ENCODE measurements at regions of chr9 and their contacts with region 1.

Region 1: GRCh38 chr9:131402738-131403492 is 9.0 kb downstream of the PRRC2B start:
- DNase-seq: peak; percentile 79 to 90
- ATAC-seq: peak; percentile 73 to 85 (median 80)
- H3K4me3 ChIP-seq: peak overlapping the region in 6 of 10 donors; percentile 6 to 23 (median 18)
- H3K27ac ChIP-seq: peak overlapping the region in 9 of 10 donors; percentile 60 to 89 (median 78)
- H3K4me1 ChIP-seq: peaks cover 52 to 100% (median 100%) of the 10 kb centered on the region in 9 donors
- H3K27me3 ChIP-seq: no peaks in the 10 kb centered on the region
- CTCF ChIP-seq: no peak

Region 2: GRCh38 chr9:131349881-131350563 is 52.9 kb before region 1 on chr9:
- intact Hi-C with region 1: no loop called
- DNase-seq: peak; percentile 91 to 92
- ATAC-seq: peak; percentile 89 to 97 (median 94)
- H3K4me3 ChIP-seq: peak overlapping the region in 8 of 10 donors; percentile 4 to 45 (median 38)
- H3K27ac ChIP-seq: peak overlapping the region in 2 of 10 donors; percentile 20 to 24
- H3K4me1 ChIP-seq: peaks cover 4 to 12% (median 10%) of the 10 kb centered on the region in 9 donors
- H3K27me3 ChIP-seq: no peaks in the 10 kb centered on the region
- CTCF ChIP-seq: peak; percentile 72 to 95 (median 89)

Region 3: GRCh38 chr9:131432597-131433306 is 29.8 kb after region 1 on chr9:
- intact Hi-C with region 1: loop called in 1 of 10 experiments (anchors 5 kb)
- DNase-seq: no peak
- ATAC-seq: peak in 7 of 8 donors; percentile 28 to 74 (median 45)
- H3K4me3 ChIP-seq: no peak overlapping the region
- H3K27ac ChIP-seq: peak overlapping the region in 4 of 10 donors; percentile 23 to 57 (median 38)
- H3K4me1 ChIP-seq: peaks cover 5 to 83% (median 43%) of the 10 kb centered on the region in 9 donors
- H3K27me3 ChIP-seq: no peaks in the 10 kb centered on the region
- CTCF ChIP-seq: no peak

Region 4: DNA sequence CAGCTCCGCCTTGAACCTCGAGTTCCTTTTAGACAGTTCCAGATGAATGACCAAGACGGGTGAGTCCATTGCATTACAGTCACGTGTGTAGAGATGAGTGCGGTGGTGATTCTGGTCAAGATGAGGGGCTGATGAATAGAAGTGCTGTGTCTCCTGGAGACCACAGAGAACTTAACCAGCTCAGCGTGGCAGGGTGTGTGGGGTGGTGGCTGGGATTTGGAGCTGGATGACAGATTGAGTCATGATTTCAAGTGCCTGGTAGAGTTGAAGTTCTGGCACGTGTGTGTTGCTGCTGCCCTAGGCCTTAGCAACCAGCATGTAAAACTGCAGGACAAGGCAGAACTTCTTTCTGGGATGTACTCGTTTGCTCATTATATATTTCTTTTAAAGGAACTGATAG is 44.2 kb after region 1 on chr9:
- intact Hi-C with region 1: no loop called
- DNase-seq: no peak
- ATAC-seq: peak in 6 of 8 donors; percentile 37 to 85 (median 68)
- H3K4me3 ChIP-seq: no peak overlapping the region
- H3K27ac ChIP-seq: no peak overlapping the region
- H3K4me1 ChIP-seq: peaks cover 0 to 3% (median 0%) of the 10 kb centered on the region in 9 donors
- H3K27me3 ChIP-seq: no peaks in the 10 kb centered on the region
- CTCF ChIP-seq: no peak